K562 (cell line): ENCODE measurements at regions of chr18 and their contacts with region 1.

Region 1: DNA sequence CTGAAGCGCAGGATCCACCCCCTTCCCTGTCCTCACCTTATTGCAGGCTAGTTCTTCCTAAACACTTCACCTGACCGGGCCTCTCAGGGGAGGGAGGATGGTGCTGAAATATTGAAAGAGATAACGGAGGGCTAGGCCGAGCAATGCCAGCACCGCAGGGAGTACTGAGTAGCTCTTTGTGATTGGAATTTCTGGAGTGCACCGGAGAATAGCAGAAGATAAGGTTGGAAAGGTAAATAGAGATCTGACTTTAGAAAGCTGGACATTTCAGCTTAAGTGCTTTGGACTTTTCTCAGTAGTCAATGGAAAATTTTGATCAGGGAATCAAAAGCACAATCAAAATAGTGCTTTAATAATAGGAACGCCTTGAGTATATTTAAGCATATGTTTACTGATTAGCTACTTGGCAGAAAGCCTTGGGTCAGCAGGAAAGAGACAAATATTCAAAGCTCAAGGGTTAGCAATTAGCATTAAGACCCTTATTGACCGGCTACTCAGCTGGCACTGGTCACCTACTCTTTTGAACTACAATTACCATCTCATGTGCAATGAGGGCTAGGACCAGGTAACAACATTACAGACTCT is 142.9 kb upstream of the NDUFV2 start:
- DNase-seq: no peak
- ATAC-seq: peak; percentile 44; the same call in 2 of the 3 replicates
- H3K4me3 ChIP-seq: no peak overlapping the region
- H3K27ac ChIP-seq: no peak overlapping the region
- H3K4me1 ChIP-seq: peaks cover 3 to 11% of the 10 kb centered on the region in 2 experiments; a peak in 3 of 5 replicates
- H3K27me3 ChIP-seq: no peaks in the 10 kb centered on the region; a peak in 1 of 5 replicates
- CTCF ChIP-seq: no peak
- EP300 ChIP-seq: no peak
- POLR2A ChIP-seq: no peak
- RAD21 ChIP-seq: no peak

Region 2: DNA sequence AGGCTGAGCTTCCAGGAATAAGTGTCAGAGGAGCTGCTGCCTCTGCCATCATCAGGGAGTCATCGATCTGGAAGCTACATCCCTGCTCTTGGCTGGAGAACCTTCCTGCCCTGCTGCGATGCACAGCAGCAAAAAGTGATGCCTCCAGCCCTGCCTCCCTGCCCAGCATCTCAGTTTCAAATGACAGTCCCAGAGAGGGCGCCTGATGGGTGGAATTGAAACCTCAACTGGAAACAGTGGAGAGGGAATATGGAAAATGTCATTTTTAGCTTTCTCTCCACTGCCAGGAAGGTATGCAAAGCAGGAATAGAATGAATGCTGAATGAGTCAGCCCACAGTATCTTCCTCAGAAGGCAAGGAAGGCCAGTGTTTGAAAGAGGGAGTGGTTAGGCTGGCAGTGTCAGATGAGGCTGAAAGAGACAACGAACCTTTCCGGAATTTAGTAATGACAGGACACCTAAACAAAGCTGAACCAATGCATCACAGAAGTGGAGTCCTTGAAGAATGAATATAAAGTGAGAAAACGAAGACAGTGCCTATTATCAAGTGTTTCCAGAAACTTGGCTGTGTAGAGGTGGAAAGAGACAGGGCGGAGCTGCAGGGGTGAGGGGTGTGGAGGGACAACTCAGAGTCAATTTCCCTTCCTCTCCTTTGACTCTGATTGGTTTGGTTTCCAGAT is 11.0 kb before region 1 on chr18:
- CTCF ChIA-PET with region 1: no interaction called
- POLR2A ChIA-PET with region 1: interaction called, 10 read pairs
- in situ Hi-C with region 1: no loop called
- intact Hi-C with region 1: no loop called
- DNase-seq: peak in 2 of 4 experiments; percentile 48 to 64
- ATAC-seq: peak; percentile 56
- H3K4me3 ChIP-seq: no peak overlapping the region
- H3K27ac ChIP-seq: no peak overlapping the region; the same call in 2 of the 3 replicates
- H3K4me1 ChIP-seq: peaks cover 17 to 37% of the 10 kb centered on the region in 2 experiments
- H3K27me3 ChIP-seq: no peaks in the 10 kb centered on the region
- CTCF ChIP-seq: no peak
- EP300 ChIP-seq: no peak
- POLR2A ChIP-seq: no peak
- RAD21 ChIP-seq: no peak

Region 3: GRCh38 chr18:9001209-9001608 is 41.6 kb after region 1 on chr18:
- CTCF ChIA-PET with region 1: no interaction called
- POLR2A ChIA-PET with region 1: no interaction called
- in situ Hi-C with region 1: no loop called
- intact Hi-C with region 1: no loop called
- DNase-seq: no peak
- ATAC-seq: no peak
- H3K4me3 ChIP-seq: no peak overlapping the region
- H3K27ac ChIP-seq: peak overlapping the region; percentile 9; the same call in 2 of the 3 replicates
- H3K4me1 ChIP-seq: peaks cover 26 to 47% of the 10 kb centered on the region in 2 experiments
- H3K27me3 ChIP-seq: no peaks in the 10 kb centered on the region
- CTCF ChIP-seq: no peak
- EP300 ChIP-seq: no peak
- POLR2A ChIP-seq: no peak
- RAD21 ChIP-seq: no peak